Vagina (tissue), 2 donors: ENCODE measurements at regions of chr5 and their contacts with region 1.

Region 1: DNA sequence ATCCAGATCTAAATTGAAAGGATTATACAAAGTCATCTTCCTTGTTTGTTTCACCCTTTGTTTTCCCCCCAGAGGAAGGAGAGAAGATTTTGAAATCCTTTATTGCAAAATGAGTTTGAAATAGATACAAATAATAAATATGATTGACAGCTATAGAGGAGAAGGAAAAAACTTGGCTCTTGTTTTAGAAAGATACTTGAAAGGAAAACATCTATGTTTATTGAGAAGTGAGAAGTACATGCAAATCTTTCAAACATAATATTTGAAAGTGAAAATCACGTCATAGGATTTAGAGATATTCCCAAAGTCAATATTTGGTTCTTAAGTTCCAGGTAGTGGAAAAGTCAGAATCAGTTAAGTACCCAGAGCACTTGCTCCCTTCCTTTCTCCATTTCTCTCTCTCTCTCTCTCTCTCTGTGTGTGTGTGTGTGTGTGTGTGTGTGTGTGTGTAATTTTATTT is 27.2 kb downstream of the PAM start:
- DNase-seq: no peak
- H3K4me3 ChIP-seq: no peak overlapping the region
- H3K27ac ChIP-seq: no peak overlapping the region
- H3K4me1 ChIP-seq: peaks cover 9% of the 10 kb centered on the region
- H3K27me3 ChIP-seq: no peaks in the 10 kb centered on the region
- CTCF ChIP-seq: no peak
- POLR2A ChIP-seq: no peak

Region 2: GRCh38 chr5:102792705-102793104 is 10.4 kb after region 1 on chr5:
- intact Hi-C with region 1: no loop called
- DNase-seq: no peak
- H3K4me3 ChIP-seq: no peak overlapping the region
- H3K27ac ChIP-seq: no peak overlapping the region
- H3K4me1 ChIP-seq: no peaks in the 10 kb centered on the region
- H3K27me3 ChIP-seq: no peaks in the 10 kb centered on the region
- CTCF ChIP-seq: no peak
- POLR2A ChIP-seq: no peak

Region 3: GRCh38 chr5:102986074-102986473 is 203.7 kb after region 1 on chr5:
- intact Hi-C with region 1: loop called (anchors 10 kb)
- DNase-seq: no peak
- H3K4me3 ChIP-seq: no peak overlapping the region
- H3K27ac ChIP-seq: no peak overlapping the region
- H3K4me1 ChIP-seq: no peaks in the 10 kb centered on the region
- H3K27me3 ChIP-seq: no peaks in the 10 kb centered on the region
- CTCF ChIP-seq: no peak
- POLR2A ChIP-seq: no peak